Endothelial cell of umbilical vein (primary cell): ENCODE measurements at regions of chr19 and their contacts with region 1.

Region 1: GRCh38 chr19:48445606-48446481 is at the start of gene GRWD1:
- DNase-seq: peak; percentile 97
- H3K4me3 ChIP-seq: peak within 1 kb of the TSS; percentile 85 to 97 (median 86)
- H3K27ac ChIP-seq: peak within 1 kb of the TSS; percentile 52
- H3K4me1 ChIP-seq: peaks cover 17% of the 10 kb centered on the region
- H3K27me3 ChIP-seq: peaks cover 7 to 19% of the 10 kb centered on the region in 2 experiments
- CTCF ChIP-seq: no peak
- POLR2A ChIP-seq: peak; percentile 71
- total RNA-seq, gene GRWD1: 52.7 and 52.8 TPM in 2 replicates

Region 2: GRCh38 chr19:48321622-48322591 is 123.9 kb before region 1 on chr19:
- CTCF ChIA-PET with region 1: interaction called, 7 read pairs
- POLR2A ChIA-PET with region 1: no interaction called
- dilution Hi-C with region 1: no loop called
- intact Hi-C with region 1: loop called (anchors 1 kb)
- DNase-seq: peak; percentile 98
- H3K4me3 ChIP-seq: peak overlapping the region in 2 of 3 experiments; percentile 38 to 40
- H3K27ac ChIP-seq: peak overlapping the region; percentile 97
- H3K4me1 ChIP-seq: peaks cover 27% of the 10 kb centered on the region
- H3K27me3 ChIP-seq: no peaks in the 10 kb centered on the region
- CTCF ChIP-seq: no peak
- POLR2A ChIP-seq: peak; percentile 82

Region 3: GRCh38 chr19:48363810-48364563 is 81.9 kb before region 1 on chr19 and contains the starts of genes SYNGR4 and TMEM143:
- CTCF ChIA-PET with region 1: interaction called, 12 read pairs
- POLR2A ChIA-PET with region 1: no interaction called
- dilution Hi-C with region 1: no loop called
- intact Hi-C with region 1: loop called (anchors 1 kb)
- DNase-seq: peak; percentile 100
- H3K4me3 ChIP-seq: peak within 1 kb of the TSS; percentile 11 to 53 (median 35)
- H3K27ac ChIP-seq: peak within 1 kb of the TSS; percentile 40
- H3K4me1 ChIP-seq: peaks cover 8% of the 10 kb centered on the region
- H3K27me3 ChIP-seq: no peaks in the 10 kb centered on the region
- CTCF ChIP-seq: no peak
- POLR2A ChIP-seq: peak; percentile 15
- total RNA-seq, gene SYNGR4: not detected in 2 replicates
- total RNA-seq, gene TMEM143: 4.6 and 7.3 TPM in 2 replicates

Region 4: DNA sequence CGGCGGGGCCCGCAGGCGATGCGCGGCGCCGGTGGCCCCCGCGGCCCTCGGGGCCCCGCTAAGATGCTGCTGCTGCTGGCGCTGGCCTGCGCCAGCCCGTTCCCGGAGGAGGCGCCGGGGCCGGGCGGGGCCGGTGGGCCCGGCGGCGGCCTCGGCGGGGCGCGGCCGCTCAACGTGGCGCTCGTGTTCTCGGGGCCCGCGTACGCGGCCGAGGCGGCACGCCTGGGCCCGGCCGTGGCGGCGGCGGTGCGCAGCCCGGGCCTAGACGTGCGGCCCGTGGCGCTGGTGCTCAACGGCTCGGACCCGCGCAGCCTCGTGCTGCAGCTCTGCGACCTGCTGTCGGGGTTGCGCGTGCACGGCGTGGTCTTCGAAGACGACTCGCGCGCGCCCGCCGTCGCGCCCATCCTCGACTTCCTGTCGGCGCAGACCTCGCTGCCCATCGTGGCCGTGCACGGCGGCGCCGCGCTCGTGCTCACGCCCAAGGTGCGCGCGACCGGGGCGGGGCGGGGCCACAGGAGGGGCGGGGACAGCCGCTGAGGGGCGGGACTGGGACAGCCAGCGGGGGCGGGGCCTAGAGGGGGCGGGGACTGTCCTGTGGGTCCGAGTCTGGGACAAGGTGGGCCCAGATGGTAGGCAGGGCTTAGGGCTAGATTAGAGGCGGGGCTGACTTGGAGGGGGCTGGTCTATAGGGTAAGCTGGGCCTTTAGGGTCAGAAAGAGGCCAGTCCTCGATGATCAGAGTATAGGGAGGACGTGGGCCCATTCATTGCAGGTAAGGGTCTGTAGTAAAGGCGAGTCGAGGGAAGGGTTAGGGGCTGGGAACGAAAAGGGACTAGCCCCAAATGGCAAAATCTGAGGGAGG is 47.2 kb before region 1 on chr19:
- CTCF ChIA-PET with region 1: interaction called, 8 read pairs
- POLR2A ChIA-PET with region 1: interaction called, 5 read pairs
- dilution Hi-C with region 1: no loop called
- intact Hi-C with region 1: loop called (anchors 2 kb)
- DNase-seq: peak; percentile 74
- H3K4me3 ChIP-seq: peak overlapping the region; percentile 29 to 38 (median 32)
- H3K27ac ChIP-seq: no peak overlapping the region
- H3K4me1 ChIP-seq: peaks cover 10% of the 10 kb centered on the region
- H3K27me3 ChIP-seq: peaks cover 21 to 23% of the 10 kb centered on the region in 2 experiments
- CTCF ChIP-seq: no peak
- POLR2A ChIP-seq: no peak

Region 5: DNA sequence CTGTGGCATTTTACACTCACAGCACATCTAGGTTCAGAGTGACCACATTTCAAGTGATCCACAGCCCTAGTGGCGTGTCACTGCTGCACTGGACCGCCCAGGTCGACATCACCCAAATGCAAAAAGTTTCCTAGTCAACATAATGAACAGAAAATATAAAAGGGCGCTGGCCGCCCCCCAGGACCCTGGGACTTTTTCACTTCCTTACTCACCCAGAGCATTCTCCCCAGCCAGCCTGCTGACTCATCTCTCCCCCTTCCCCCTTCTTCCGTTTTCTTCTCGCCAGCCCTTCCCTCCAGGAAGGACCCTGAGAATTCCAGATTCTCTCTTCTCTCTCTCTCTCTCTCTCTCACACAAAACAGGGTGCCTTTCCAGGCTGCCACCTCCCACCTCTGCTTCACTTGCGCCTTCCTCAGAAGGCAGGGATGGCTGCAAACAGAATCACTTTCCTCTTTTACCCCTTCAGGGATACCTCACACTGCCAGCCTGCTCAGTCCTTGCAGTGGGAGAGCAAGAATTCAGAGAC is 21.1 kb before region 1 on chr19:
- CTCF ChIA-PET with region 1: no interaction called
- POLR2A ChIA-PET with region 1: no interaction called
- dilution Hi-C with region 1: no loop called
- intact Hi-C with region 1: loop called (anchors 1 kb)
- DNase-seq: peak; percentile 88
- H3K4me3 ChIP-seq: peak overlapping the region in 2 of 3 experiments; percentile 7
- H3K27ac ChIP-seq: peak overlapping the region; percentile 78
- H3K4me1 ChIP-seq: peaks cover 12% of the 10 kb centered on the region
- H3K27me3 ChIP-seq: no peaks in the 10 kb centered on the region
- CTCF ChIP-seq: no peak
- POLR2A ChIP-seq: peak; percentile 70

Region 6: GRCh38 chr19:48530066-48530720 is 84.3 kb after region 1 on chr19:
- CTCF ChIA-PET with region 1: no interaction called
- POLR2A ChIA-PET with region 1: no interaction called
- dilution Hi-C with region 1: no loop called
- intact Hi-C with region 1: no loop called
- DNase-seq: no peak
- H3K4me3 ChIP-seq: no peak overlapping the region
- H3K27ac ChIP-seq: no peak overlapping the region
- H3K4me1 ChIP-seq: no peaks in the 10 kb centered on the region
- H3K27me3 ChIP-seq: peaks cover 2 to 4% of the 10 kb centered on the region in 2 experiments
- CTCF ChIP-seq: no peak
- POLR2A ChIP-seq: no peak